HCT116 (cell line): ENCODE measurements at regions of chr1 and their contacts with region 1.

Region 1: DNA sequence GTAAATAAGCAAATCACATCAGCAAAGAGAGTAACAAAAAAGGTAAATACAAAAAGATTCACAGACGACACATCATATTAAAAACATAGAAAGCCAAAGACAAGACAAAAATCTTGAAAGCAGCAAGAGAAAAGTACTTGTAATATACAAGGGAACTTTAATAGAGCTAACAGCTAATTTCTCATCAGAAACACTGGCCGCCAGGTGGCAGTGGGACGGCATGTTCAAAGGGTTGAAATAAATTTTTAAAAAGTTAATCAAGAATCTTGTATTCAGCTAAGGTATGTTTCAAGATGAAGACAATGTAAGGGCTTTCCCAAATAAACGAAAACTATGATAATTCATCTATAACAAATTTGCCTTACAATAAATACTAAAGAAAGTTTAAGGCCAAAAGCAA is 358.1 kb downstream of the LRRIQ3 start:
- DNase-seq: no peak
- ATAC-seq: no peak
- H3K4me3 ChIP-seq: no peak overlapping the region
- H3K27ac ChIP-seq: no peak overlapping the region
- H3K4me1 ChIP-seq: no peaks in the 10 kb centered on the region
- H3K27me3 ChIP-seq: no peaks in the 10 kb centered on the region
- CTCF ChIP-seq: peak in 2 of 3 experiments; percentile 7 to 32; a peak in 1 of 6 replicates
- POLR2A ChIP-seq: no peak
- RAD21 ChIP-seq: no peak

Region 2: GRCh38 chr1:73886716-73887115 is 46.8 kb after region 1 on chr1:
- CTCF ChIA-PET with region 1: no interaction called
- POLR2A ChIA-PET with region 1: no interaction called
- RAD21 ChIA-PET with region 1: no interaction called
- intact Hi-C with region 1: no loop called
- DNase-seq: no peak
- ATAC-seq: no peak
- H3K4me3 ChIP-seq: no peak overlapping the region
- H3K27ac ChIP-seq: no peak overlapping the region
- H3K4me1 ChIP-seq: no peaks in the 10 kb centered on the region
- H3K27me3 ChIP-seq: no peaks in the 10 kb centered on the region
- CTCF ChIP-seq: no peak
- POLR2A ChIP-seq: no peak
- RAD21 ChIP-seq: no peak

Region 3: DNA sequence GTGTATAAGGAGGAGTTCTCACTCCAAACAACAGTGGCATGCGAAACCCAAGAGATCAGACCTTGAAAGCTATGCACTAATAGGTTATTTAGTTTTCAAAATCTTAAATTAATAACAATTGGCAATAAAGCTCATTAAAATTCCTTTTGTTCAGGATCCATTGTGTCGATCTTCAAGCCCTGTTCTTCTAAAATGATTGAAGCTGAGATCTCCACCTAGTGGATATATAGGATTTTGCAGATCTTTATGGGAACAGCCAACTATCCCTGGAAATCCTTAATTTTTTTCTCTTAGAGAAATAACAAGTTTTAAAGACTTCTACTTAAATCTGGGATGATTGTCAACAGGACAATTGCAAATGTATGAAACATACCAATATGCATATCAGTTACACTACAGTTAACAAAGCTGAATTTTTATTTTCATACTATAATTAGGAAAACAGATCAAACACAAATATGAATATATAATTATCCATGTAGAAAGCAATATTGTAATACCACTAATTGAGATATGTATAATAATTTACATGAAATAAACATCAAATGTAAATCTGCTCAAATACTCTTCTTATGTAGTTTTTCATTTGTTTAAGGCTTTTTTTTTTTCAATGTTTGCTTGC is 629.2 kb after region 1 on chr1:
- CTCF ChIA-PET with region 1: no interaction called
- POLR2A ChIA-PET with region 1: no interaction called
- RAD21 ChIA-PET with region 1: no interaction called
- intact Hi-C with region 1: loop called (anchors 10 kb)
- DNase-seq: peak; percentile 18
- ATAC-seq: no peak
- H3K4me3 ChIP-seq: no peak overlapping the region
- H3K27ac ChIP-seq: no peak overlapping the region
- H3K4me1 ChIP-seq: no peaks in the 10 kb centered on the region
- H3K27me3 ChIP-seq: peaks cover 17% of the 10 kb centered on the region
- CTCF ChIP-seq: peak in 2 of 3 experiments; percentile 50 to 70; a peak in 4 of 6 replicates
- POLR2A ChIP-seq: no peak
- RAD21 ChIP-seq: peak; percentile 53